Pancreas (tissue), 10 donors: ENCODE measurements at regions of chr7 and their contacts with region 1.

Region 1: DNA sequence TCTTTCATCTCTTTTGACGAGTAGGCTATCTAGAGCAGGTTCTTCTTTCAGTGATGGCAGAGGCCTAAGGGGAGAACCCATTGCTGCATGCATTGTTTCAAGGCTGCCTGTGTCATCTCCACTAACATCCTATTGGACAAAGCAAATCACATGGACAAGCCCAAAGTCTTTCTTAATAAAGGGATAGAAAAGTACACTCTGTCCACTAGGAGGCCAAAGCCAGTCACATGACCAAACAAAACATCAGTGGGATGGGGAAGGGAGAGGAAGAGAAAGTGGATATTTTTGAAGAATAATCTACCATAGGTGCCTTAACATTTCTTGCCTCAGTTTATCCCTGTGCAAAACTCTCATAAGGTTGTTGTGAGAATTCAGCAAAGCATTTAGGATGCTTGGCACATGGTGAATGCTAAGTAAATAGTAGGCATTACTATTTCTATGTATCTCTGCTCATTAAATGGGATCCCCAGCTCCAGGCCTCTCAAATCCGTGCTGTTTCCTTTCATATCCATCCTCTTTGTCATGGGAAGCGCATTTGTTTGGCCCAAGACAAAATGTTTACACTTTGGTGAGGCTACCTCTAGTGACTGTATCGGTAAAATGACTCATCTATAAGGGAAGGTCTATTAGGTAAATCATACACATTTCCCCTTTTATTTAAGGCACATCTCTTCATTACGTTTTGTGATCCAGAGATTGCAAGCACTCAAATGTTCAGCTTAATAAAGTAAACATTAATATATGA is 16.7 kb upstream of the CADPS2 start:
- DNase-seq: no peak
- ATAC-seq: no peak
- H3K4me3 ChIP-seq: no peak overlapping the region
- H3K27ac ChIP-seq: no peak overlapping the region
- H3K4me1 ChIP-seq: no peaks in the 10 kb centered on the region
- H3K27me3 ChIP-seq: no peaks in the 10 kb centered on the region
- CTCF ChIP-seq: no peak

Region 2: DNA sequence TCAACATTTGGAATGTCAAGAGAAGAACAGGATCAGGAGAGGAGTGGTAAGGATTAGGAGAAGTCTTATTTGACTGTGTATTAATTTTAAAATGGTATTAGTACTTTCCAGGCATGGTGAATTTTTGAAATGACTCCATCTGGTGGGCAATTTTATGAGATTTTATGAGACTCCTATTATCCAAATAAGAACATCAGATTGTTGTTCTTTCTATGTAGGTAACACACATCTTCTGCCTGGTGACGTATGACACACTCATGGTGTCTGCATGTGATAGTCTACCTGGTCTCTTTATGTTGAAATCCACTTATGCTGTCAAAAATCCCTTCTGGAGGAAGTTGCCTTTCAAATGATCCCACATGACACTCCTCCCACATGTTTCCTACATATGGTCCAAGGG is 245.9 kb after region 1 on chr7:
- intact Hi-C with region 1: loop called in 1 of 3 experiments (anchors 10 kb)
- DNase-seq: no peak
- ATAC-seq: no peak
- H3K4me3 ChIP-seq: no peak overlapping the region
- H3K27ac ChIP-seq: no peak overlapping the region
- H3K4me1 ChIP-seq: no peaks in the 10 kb centered on the region
- H3K27me3 ChIP-seq: no peaks in the 10 kb centered on the region
- CTCF ChIP-seq: no peak

Region 3: GRCh38 chr7:123259759-123260158 is 356.8 kb after region 1 on chr7:
- intact Hi-C with region 1: no loop called
- DNase-seq: no peak
- ATAC-seq: no peak
- H3K4me3 ChIP-seq: no peak overlapping the region
- H3K27ac ChIP-seq: no peak overlapping the region
- H3K4me1 ChIP-seq: no peaks in the 10 kb centered on the region
- H3K27me3 ChIP-seq: no peaks in the 10 kb centered on the region
- CTCF ChIP-seq: no peak